ENCODE measurements at regions of chr16 and their contacts with region 1.

Region 1: DNA sequence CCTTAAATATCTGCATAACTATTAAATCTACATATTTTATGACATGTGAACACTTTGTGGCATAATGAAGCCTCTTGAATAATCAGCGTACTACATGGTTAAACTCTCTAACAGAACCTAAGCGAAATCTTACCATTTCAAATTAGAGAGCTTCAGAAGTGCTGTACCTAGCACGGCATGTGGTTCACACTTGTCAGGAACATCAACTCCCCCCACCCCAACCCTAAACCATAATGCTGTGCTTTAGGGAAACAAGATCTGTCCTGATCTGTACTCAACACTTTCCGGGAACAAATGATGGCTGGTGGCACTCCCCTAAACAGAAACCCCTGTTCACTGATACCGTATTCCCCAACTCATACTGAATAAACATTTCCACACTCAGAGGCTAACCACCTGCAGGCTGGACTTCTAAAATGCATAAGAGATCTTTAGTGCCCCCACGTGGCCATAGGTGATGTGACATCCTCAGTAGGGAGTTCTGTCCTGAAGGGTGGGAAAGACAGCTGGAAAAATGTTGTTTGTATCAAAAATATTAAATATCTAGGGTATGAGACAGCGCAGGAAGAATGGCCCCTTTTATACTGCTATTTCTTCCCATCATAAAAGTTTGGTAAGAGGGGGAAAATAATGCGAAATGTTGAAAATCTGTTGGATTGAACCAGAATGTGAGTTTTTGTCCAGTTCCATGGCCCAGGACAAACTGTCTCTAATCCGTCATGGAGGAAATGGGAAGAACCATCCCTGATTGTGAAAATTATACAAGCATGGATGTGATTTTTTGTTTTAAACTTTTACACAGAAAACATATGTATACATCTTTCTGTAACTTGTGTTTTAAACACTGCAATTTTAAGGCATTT is 88.6 kb downstream of the USP31 start:
- DNase-seq: peak in 9 of 10 donors; percentile 39 to 95 (median 83)

Region 2: GRCh38 chr16:22977294-22977697 is 83.4 kb before region 1 on chr16:
- intact Hi-C with region 1: loop called (anchors 5 kb)
- DNase-seq: no peak

Measured in posterior cingulate gyrus (tissue), 11 donors.